HepG2 (cell line): ENCODE measurements at regions of chr1 and their contacts with region 1.

Region 1: DNA sequence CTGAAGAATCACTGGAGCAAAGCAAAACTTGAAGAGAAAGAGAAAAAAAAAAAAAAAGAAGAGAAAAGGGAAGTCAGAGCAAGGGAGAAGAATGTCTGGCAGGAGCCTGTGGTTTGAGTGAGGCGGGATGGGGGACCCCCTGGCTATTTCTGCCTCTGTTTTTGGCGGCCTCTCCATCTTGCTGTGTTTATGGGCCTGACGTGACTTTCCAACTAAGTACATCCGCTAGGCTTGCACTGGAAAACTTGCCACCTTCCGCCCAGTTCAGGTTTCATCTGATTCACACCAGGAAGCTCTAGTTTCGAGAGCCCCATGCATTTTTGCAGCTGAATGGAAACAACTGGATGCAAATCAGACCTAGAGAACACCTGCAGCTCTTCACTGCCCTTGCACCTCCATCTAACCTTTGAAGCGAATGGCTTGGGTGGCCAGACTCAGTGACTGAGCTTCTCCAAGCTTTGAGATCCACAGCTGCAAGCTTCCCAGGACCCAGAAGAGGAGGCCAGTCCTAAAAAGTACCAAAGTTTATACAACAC is 28.0 kb downstream of the TBX15 start:
- DNase-seq: no peak
- ATAC-seq: no peak
- H3K4me3 ChIP-seq: peak overlapping the region in 1 of 3 experiments; percentile 16; a peak in 1 of 6 replicates
- H3K27ac ChIP-seq: peak overlapping the region; percentile 98
- H3K4me1 ChIP-seq: peaks cover 73% of the 10 kb centered on the region
- H3K27me3 ChIP-seq: no peaks in the 10 kb centered on the region
- CTCF ChIP-seq: no peak
- EP300 ChIP-seq: no peak
- POLR2A ChIP-seq: no peak
- RAD21 ChIP-seq: no peak

Region 2: DNA sequence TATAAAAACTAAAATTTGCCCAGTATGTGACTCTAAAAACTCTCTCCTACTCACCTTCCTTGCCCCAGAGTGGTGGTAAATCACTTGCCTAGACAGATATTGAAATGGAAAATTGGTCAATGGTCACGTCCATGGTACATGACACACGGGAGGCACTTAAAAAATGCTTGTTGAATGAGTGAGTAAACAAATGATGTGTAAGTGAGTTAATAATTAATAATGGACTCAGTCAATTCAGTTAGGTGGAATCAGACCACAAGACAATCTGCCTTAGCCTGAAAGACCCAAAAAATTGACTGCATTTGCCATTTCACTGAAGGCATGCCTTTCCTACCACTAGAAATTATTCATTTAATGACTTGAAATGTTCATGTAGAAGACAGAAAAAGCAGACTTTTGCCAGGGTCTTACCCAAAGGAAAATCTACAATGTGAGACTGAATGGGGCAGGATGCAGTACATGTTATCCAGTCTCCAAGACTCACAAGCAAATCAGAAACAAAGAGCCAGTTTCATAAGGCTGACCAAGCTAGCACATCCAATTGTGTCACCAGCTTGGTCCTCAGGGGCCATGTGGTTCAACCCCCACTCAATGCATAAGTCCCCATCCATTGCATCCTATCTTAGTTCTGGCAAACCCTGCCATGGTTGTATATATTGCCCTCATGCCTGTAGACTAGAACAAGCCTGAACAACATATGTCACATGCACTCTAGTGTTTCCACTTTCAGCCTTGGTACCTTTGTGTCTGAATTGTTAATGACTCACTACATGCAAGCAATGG is 45.5 kb before region 1 on chr1:
- CTCF ChIA-PET with region 1: interaction called, 3 read pairs
- POLR2A ChIA-PET with region 1: interaction called, 8 read pairs
- in situ Hi-C with region 1: no loop called
- intact Hi-C with region 1: loop called (anchors 1 kb)
- DNase-seq: peak; percentile 87
- ATAC-seq: peak; percentile 95
- H3K4me3 ChIP-seq: peak overlapping the region in 1 of 3 experiments; percentile 33; a peak in 1 of 6 replicates
- H3K27ac ChIP-seq: peak overlapping the region; percentile 75
- H3K4me1 ChIP-seq: peaks cover 55% of the 10 kb centered on the region
- H3K27me3 ChIP-seq: no peaks in the 10 kb centered on the region
- CTCF ChIP-seq: no peak
- EP300 ChIP-seq: peak in 1 of 2 experiments; percentile 84; a peak in 2 of 4 replicates
- POLR2A ChIP-seq: no peak
- RAD21 ChIP-seq: no peak

Region 3: GRCh38 chr1:119140177-119141019 is 180.3 kb after region 1 on chr1 and contains the start of gene WARS2:
- CTCF ChIA-PET with region 1: no interaction called
- POLR2A ChIA-PET with region 1: interaction called, 7 read pairs
- in situ Hi-C with region 1: no loop called
- intact Hi-C with region 1: loop called (anchors 10 kb)
- DNase-seq: peak; percentile 95
- ATAC-seq: peak; percentile 99
- H3K4me3 ChIP-seq: peak within 1 kb of the TSS; percentile 75 to 85 (median 75)
- H3K27ac ChIP-seq: peak within 1 kb of the TSS; percentile 91
- H3K4me1 ChIP-seq: peaks cover 30% of the 10 kb centered on the region
- H3K27me3 ChIP-seq: no peaks in the 10 kb centered on the region
- CTCF ChIP-seq: peak; percentile 25; the same call in 1 of the 2 replicates
- EP300 ChIP-seq: no peak; a peak in 1 of 4 replicates
- POLR2A ChIP-seq: peak; percentile 86 to 92
- RAD21 ChIP-seq: peak; percentile 17; the same call in 1 of the 2 replicates
- total RNA-seq, gene WARS2: 18.8 and 27.5 TPM in 2 replicates